ENCODE measurements at regions of chr17 and their contacts with region 1.

Region 1: GRCh38 chr17:48215583-48216139 is 108.1 kb downstream of the SNX11 start:
- DNase-seq: peak; percentile 74
- H3K4me3 ChIP-seq: no peak overlapping the region
- H3K27ac ChIP-seq: no peak overlapping the region
- H3K4me1 ChIP-seq: peaks cover 3% of the 10 kb centered on the region
- H3K27me3 ChIP-seq: no peaks in the 10 kb centered on the region
- CTCF ChIP-seq: peak; percentile 71 to 90
- POLR2A ChIP-seq: no peak

Region 2: DNA sequence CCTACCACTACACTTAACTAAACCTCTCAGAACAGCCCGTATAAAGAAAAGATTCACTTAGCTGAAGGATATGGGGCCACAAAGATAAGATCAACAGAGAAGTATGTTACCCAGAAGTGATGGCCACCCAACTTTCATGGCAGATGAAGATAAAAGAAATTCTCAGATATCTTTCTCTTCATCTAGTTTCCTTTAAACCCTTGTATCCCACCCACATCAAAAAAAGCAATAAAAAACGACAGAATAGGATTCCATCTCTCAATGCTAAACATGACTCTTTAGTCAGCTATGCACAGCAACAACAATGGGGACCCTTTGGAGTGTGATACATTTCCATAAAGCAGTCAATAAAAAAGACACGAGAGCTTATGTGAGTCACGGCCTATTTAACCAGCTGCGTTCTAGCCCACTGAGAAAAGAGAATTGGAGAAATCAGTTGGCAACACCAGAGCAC is 21.5 kb before region 1 on chr17:
- CTCF ChIA-PET with region 1: interaction called, 12 read pairs
- POLR2A ChIA-PET with region 1: no interaction called
- dilution Hi-C with region 1: no loop called
- intact Hi-C with region 1: no loop called
- DNase-seq: peak; percentile 51
- H3K4me3 ChIP-seq: no peak overlapping the region
- H3K27ac ChIP-seq: peak overlapping the region; percentile 26
- H3K4me1 ChIP-seq: peaks cover 7% of the 10 kb centered on the region
- H3K27me3 ChIP-seq: peaks cover 0 to under 1% of the 10 kb centered on the region in 2 experiments
- CTCF ChIP-seq: no peak
- POLR2A ChIP-seq: no peak

Region 3: DNA sequence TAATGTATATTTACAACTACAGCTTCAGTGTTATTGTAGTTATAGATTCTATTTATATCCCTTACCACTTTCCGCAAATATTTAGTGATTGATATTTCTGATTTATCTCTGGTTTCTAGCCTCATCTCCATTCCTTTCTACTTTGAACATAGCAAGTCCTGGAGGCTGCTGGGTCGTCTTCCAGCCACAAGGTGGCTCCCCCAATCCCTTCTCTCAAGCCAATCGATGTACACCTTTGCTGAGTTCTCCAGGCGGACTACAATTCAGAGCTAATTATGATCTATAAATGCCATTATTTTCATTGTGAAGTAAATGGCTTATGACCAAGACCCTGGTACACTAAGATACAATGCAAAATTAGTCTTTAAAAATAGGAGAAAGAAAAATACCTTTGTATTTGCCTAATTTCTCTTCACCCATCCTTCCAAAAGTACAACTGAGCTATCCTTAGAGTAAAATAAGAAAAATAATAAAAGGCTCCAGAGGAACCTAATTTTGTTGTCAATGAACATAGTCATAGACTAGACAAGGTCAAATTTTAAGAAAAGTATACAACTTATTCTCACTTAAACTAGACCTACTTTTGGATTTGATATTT is 92.3 kb after region 1 on chr17:
- CTCF ChIA-PET with region 1: interaction called, 46 read pairs
- POLR2A ChIA-PET with region 1: no interaction called
- dilution Hi-C with region 1: no loop called
- intact Hi-C with region 1: loop called (anchors 1 kb)
- DNase-seq: peak; percentile 59
- H3K4me3 ChIP-seq: no peak overlapping the region
- H3K27ac ChIP-seq: no peak overlapping the region
- H3K4me1 ChIP-seq: no peaks in the 10 kb centered on the region
- H3K27me3 ChIP-seq: no peaks in the 10 kb centered on the region
- CTCF ChIP-seq: peak; percentile 79 to 84
- POLR2A ChIP-seq: no peak

Region 4: DNA sequence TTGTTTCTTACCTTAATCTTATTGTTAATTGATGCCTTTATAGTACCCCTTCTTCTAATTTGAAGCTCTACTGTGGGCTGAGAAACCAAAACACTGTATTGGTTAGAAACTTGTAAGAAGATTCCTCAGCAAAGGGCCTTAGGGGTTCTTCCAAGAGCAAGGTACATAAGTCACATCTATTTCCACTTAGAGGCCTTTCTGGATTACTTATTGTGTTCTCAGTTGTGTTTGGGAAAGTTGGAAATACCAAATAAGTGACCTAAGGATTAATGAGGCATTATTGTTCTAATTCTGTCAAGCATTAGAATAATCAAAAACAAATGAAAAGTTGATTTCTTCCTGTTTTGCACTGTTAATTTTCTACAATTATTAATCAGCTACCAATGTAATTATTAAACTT is 128.6 kb after region 1 on chr17:
- CTCF ChIA-PET with region 1: interaction called, 11 read pairs
- POLR2A ChIA-PET with region 1: no interaction called
- dilution Hi-C with region 1: no loop called
- intact Hi-C with region 1: no loop called
- DNase-seq: no peak
- H3K4me3 ChIP-seq: no peak overlapping the region
- H3K27ac ChIP-seq: no peak overlapping the region
- H3K4me1 ChIP-seq: no peaks in the 10 kb centered on the region
- H3K27me3 ChIP-seq: peaks cover 0 to 4% of the 10 kb centered on the region in 2 experiments
- CTCF ChIP-seq: no peak
- POLR2A ChIP-seq: no peak

Region 5: GRCh38 chr17:48457080-48457836 is 241.6 kb after region 1 on chr17:
- CTCF ChIA-PET with region 1: interaction called, 16 read pairs
- POLR2A ChIA-PET with region 1: no interaction called
- dilution Hi-C with region 1: no loop called
- intact Hi-C with region 1: loop called (anchors 1 kb)
- DNase-seq: peak; percentile 70
- H3K4me3 ChIP-seq: no peak overlapping the region
- H3K27ac ChIP-seq: no peak overlapping the region
- H3K4me1 ChIP-seq: no peaks in the 10 kb centered on the region
- H3K27me3 ChIP-seq: peaks cover 40 to 54% of the 10 kb centered on the region in 2 experiments
- CTCF ChIP-seq: peak; percentile 96 to 98
- POLR2A ChIP-seq: no peak

Region 6: GRCh38 chr17:48593840-48594537 is 378.3 kb after region 1 on chr17:
- CTCF ChIA-PET with region 1: interaction called, 18 read pairs
- POLR2A ChIA-PET with region 1: no interaction called
- dilution Hi-C with region 1: no loop called
- intact Hi-C with region 1: loop called (anchors 1 kb)
- DNase-seq: peak; percentile 86
- H3K4me3 ChIP-seq: no peak overlapping the region
- H3K27ac ChIP-seq: peak overlapping the region; percentile 0
- H3K4me1 ChIP-seq: peaks cover 25% of the 10 kb centered on the region
- H3K27me3 ChIP-seq: no peaks in the 10 kb centered on the region
- CTCF ChIP-seq: peak; percentile 95 to 97
- POLR2A ChIP-seq: no peak

Measured in endothelial cell of umbilical vein (primary cell).